Endothelial cell of umbilical vein (primary cell): ENCODE measurements at regions of chr10 and their contacts with region 1.

Region 1: DNA sequence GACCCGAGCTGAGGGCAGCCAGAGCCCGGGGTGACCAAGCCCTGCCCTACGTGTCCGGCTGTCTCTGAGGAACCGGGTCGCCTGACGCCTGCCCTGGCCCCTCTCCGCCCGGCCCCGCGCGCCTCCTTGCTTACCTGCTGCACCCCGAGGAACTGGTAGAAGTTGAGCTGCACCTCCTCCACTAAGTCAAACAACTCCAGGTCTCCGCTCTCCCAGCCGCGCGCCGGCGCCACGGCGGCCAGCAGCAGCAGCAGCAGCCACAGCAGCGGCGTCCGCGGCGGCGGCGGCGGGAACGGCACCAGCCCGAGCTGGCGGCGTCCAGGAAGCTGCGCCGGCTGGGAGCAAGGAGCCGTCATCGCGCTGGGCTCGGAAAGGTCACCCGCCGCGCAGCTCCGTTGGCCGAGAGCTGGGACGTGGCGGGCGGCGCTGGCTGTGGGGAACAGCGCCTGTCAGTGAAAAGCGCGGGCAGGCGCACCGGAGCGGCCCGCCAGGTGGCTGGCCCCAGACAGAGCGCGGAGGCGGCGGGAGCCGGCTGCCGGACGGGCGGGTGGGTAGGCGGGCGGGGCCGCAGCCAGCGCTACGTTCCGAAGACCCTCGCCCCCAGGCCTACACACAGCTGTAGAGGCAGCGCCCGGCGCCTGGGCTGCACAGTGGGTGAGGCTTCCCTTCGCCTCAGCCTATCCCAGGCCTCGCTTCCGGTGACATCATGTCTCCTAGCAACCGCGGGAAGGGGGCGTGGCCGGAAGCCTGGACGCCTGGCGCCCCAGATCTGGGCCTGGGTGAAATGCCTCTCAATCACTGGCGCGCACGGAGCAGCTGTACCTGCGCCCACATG is at the start of gene DNAJC1:
- DNase-seq: peak; percentile 95
- H3K4me3 ChIP-seq: peak within 1 kb of the TSS; percentile 47 to 93 (median 86)
- H3K27ac ChIP-seq: peak within 1 kb of the TSS; percentile 86
- H3K4me1 ChIP-seq: peaks cover 10% of the 10 kb centered on the region
- H3K27me3 ChIP-seq: peaks cover 3 to 27% of the 10 kb centered on the region in 2 experiments
- CTCF ChIP-seq: no peak
- POLR2A ChIP-seq: peak; percentile 80
- total RNA-seq, gene DNAJC1: 19.7 and 22.5 TPM in 2 replicates

Region 2: DNA sequence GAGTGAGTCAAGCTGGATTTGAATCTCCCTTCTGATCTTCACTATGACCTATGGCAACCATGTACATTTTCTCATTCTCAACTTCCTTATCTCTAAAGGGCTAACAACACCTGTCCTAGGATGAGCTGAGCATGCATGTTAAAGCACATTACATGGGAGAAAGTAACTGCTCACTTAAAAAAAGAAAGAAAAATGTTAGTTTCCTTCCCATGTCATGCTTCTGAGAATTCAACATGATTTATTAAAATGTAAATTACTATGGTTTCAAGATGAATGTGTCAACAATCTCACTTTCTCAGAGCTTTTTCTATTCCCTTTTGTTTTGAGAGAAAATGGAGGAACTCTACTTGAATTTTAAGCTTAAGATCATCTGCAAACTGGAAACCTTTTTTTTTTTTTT is 773.1 kb before region 1 on chr10:
- CTCF ChIA-PET with region 1: no interaction called
- POLR2A ChIA-PET with region 1: no interaction called
- dilution Hi-C with region 1: no loop called
- intact Hi-C with region 1: no loop called
- DNase-seq: no peak
- H3K4me3 ChIP-seq: no peak overlapping the region
- H3K27ac ChIP-seq: no peak overlapping the region
- H3K4me1 ChIP-seq: no peaks in the 10 kb centered on the region
- H3K27me3 ChIP-seq: no peaks in the 10 kb centered on the region
- CTCF ChIP-seq: no peak
- POLR2A ChIP-seq: no peak

Region 3: GRCh38 chr10:21989453-21990154 is 13.7 kb before region 1 on chr10:
- CTCF ChIA-PET with region 1: interaction called, 14 read pairs
- POLR2A ChIA-PET with region 1: no interaction called
- dilution Hi-C with region 1: no loop called
- intact Hi-C with region 1: no loop called
- DNase-seq: peak; percentile 38
- H3K4me3 ChIP-seq: no peak overlapping the region
- H3K27ac ChIP-seq: no peak overlapping the region
- H3K4me1 ChIP-seq: no peaks in the 10 kb centered on the region
- H3K27me3 ChIP-seq: no peaks in the 10 kb centered on the region
- CTCF ChIP-seq: peak; percentile 21 to 45
- POLR2A ChIP-seq: no peak

Region 4: GRCh38 chr10:22251751-22252223 is 248.5 kb after region 1 on chr10:
- CTCF ChIA-PET with region 1: no interaction called
- POLR2A ChIA-PET with region 1: no interaction called
- dilution Hi-C with region 1: no loop called
- intact Hi-C with region 1: loop called (anchors 1 kb)
- DNase-seq: peak; percentile 67
- H3K4me3 ChIP-seq: peak overlapping the region; percentile 58 to 87 (median 58)
- H3K27ac ChIP-seq: peak overlapping the region; percentile 81
- H3K4me1 ChIP-seq: peaks cover 6% of the 10 kb centered on the region
- H3K27me3 ChIP-seq: peaks cover under 1 to 1% of the 10 kb centered on the region in 2 experiments
- CTCF ChIP-seq: no peak
- POLR2A ChIP-seq: no peak

Region 5: DNA sequence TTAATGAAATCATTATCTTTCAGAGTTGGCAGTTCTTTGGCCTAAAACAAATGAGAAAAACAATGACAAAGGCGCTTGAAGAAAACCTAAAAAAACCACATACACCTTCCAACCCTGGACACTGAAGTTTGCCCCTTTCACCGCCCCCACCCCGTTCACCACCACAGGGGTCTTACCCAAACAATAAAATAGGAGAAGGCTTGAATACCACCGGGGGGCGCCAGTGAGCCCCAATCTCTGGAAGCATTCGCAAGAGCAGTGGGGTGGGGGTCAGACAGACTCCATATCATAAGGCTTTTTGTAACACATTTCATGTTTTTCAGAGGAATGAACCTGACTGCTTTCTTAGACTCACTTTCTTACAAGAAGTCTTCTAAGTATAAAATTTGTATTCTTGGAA is 547.4 kb after region 1 on chr10:
- CTCF ChIA-PET with region 1: no interaction called
- POLR2A ChIA-PET with region 1: no interaction called
- dilution Hi-C with region 1: no loop called
- intact Hi-C with region 1: loop called (anchors 5 kb)
- DNase-seq: peak; percentile 44
- H3K4me3 ChIP-seq: no peak overlapping the region
- H3K27ac ChIP-seq: no peak overlapping the region
- H3K4me1 ChIP-seq: no peaks in the 10 kb centered on the region
- H3K27me3 ChIP-seq: no peaks in the 10 kb centered on the region
- CTCF ChIP-seq: peak; percentile 60 to 61
- POLR2A ChIP-seq: no peak